Left colon (tissue), 2 donors: ENCODE measurements at regions of chr1 and their contacts with region 1.

Region 1: DNA sequence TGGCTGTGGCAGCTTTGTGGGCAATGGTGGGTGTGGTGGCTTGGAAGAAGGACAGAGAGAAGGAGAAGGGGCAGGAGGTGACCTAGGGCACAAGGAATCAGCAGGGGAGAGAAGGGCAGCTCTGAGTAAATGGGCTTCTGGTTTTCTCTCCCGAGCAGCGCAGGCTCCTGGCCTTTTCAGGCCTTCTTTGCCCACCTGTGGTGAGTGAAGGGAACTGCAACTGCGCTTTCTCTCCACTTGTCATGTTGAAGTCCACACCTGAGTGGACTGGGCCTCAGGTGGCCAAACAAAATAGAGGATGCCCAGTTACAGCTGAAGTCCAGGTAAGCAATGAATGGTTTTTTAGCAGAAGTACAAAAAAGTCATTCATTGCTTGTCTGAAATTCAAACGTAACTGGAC is 29.4 kb upstream of the KCNA10 start:
- DNase-seq: no peak
- ATAC-seq: peak; percentile 42

Region 2: DNA sequence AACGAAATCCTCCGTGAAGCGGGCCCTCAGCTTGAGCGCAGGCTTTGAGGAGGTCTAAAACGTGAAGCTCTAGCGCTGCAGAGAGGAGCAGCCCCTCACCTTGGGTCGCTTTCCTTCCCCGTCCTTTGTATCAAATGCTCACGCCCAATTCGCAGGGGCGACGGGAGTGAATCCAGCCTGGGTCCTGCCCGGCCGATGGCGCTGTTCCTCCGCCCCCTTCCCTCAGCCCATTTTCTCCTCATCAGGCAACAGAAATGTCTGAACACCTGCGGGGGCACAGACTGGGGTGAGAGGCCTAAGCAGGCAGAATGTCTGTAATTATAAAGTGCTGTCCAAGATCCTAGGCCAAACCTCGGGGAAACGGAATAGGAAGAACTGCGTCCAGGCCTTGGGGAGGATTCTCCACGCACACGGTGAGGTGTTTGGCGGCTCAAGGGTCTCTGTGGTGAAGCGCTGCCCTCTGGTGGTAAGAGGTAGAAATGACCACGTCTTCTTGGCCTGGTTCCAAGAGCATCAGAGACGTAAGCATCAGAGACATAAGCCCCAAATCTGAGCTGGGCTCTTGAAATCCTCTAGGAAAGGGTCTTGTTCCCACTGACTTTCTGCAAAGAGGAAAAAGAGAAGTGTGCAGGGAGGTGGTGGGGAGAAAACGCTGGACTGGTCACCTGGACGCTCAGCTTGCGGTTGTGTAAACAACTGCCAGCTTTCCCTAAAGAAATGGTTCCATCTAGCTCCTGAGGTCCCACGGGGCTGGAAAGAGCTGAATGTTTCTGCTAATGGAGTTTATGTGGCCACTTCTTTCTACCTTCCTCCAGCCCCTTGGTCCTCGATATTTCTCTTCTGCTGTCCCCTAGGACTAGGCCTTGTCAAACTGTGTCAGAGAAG is 232.5 kb after region 1 on chr1:
- intact Hi-C with region 1: loop called in 1 of 2 experiments (anchors 10 kb)
- DNase-seq: peak in 1 of 2 donors; percentile 56
- ATAC-seq: peak; percentile 45